A549 (cell line): ENCODE measurements at regions of chr11 and their contacts with region 1.

Region 1: DNA sequence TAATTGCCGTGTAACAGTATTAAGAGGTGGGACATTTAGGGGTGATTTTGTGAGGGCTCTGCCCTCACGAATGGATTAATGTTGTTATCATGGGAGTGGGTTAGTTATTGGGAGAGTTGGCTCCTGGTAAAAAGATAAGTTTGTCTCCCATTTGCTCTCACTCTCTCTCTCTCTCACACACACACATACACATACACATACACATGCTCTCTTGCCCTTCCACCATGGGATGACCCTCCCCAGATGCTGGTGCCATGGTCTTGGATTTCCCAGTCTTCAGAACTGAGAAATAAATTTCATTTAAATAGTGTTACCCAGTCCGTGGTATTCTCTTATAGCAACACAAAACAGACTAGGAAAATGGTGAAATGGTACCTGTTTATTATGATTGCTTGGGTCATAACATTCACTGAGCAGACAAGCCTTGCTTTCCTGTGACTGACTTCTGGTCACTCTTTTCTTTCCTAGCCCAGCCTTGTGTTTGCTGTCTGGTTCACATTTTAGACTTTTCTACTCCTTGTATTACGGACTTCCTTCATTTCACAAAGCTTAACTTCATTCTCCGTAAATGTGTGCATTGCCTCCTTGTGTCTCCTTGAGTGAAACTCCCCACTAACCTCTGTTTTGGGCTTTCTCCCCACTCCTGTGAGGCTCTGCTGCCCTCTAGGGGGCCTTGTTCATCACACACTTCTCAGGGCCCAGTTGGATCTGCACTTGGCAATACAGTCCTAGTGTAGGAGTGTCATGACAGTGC is 206.5 kb upstream of the CTSC start:
- DNase-seq: peak; percentile 48 to 82
- ATAC-seq: peak; percentile 100
- H3K4me3 ChIP-seq: no peak overlapping the region
- H3K27ac ChIP-seq: peak overlapping the region; percentile 11 to 59; a peak in 5 of 6 replicates
- H3K4me1 ChIP-seq: peaks cover 6% of the 10 kb centered on the region; the same call in 1 of the 3 replicates
- CTCF ChIP-seq: peak; percentile 99
- EP300 ChIP-seq: no peak
- POLR2A ChIP-seq: no peak
- RAD21 ChIP-seq: peak; percentile 99 to 100

Region 2: DNA sequence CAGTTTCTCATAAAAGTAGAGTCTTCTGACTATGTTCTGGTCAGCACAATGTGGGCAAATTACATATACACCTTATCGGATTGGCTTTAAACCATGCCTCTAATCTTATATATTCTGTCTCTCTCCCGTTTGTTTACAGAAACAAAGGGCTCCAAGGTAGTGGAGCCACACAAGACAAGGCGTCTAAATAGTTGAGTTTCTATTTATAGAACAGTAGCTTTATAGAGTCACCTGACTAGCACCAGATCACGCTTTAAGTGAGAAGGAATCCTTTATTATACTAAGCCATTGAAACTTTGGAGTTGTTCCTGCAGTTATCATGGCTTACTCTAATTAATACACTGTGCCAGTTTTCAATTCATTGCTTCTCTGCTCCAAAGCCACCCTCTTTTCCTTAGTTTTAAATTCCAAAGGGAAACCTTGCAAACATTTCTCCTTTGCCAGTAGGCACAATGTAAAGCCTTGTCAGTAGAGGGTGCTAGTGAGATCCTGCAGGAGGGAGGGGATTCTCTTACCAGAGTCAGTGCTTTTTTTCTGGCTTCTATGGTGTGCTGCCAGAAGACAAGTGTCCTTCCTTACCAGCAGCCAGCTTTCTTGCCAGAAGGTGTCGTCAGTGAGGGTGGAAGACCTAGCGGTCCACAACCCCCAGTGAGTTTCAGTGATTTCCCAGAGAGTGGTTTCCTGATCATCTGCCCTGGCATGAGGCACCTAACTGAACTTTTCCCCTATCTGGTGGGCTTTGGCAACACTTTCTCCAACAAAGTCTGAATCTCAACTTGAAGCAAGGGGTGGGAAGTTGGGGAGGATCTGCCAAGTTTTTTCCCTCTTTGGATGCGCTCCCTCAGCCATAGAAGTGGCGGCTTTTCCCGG is 440.5 kb before region 1 on chr11:
- CTCF ChIA-PET with region 1: interaction called, 31 read pairs
- POLR2A ChIA-PET with region 1: no interaction called
- DNase-seq: peak; percentile 58 to 95
- ATAC-seq: peak; percentile 96 to 99
- H3K4me3 ChIP-seq: peak overlapping the region; percentile 21
- H3K27ac ChIP-seq: peak overlapping the region; percentile 79 to 87
- H3K4me1 ChIP-seq: peaks cover 41% of the 10 kb centered on the region
- CTCF ChIP-seq: peak; percentile 89
- EP300 ChIP-seq: no peak
- POLR2A ChIP-seq: no peak
- RAD21 ChIP-seq: peak; percentile 70 to 77

Region 3: DNA sequence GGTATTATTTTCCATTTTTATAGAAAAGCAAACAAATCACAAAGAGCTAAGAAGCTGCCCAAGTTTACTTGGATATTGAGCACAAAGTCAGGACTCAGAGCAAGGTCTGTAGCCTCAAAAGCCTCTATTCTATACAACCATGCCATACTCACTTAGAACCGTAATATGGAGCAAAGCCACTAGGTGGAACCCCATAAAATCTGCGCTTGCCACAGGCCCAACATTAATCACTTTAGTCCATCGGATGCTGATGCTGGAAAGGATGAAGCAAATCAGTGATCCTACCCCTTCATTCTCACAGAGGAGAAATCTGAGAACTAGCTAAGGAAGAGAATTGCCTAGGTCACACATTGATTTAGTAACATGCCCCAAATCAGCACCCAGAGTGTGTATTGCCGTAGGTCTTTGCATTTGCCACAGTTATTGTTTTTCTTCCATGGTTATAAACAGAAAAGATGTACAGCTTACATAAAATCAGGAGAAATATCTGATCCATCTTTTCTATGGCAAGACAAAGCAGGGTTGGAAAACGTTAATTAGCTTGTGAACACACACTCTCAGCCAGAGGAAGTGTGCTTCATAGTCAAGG is 312.1 kb before region 1 on chr11:
- CTCF ChIA-PET with region 1: interaction called, 11 read pairs
- POLR2A ChIA-PET with region 1: no interaction called
- DNase-seq: peak; percentile 7 to 11
- ATAC-seq: peak; percentile 77 to 90; a peak in 4 of 6 replicates
- H3K4me3 ChIP-seq: no peak overlapping the region
- H3K27ac ChIP-seq: no peak overlapping the region
- H3K4me1 ChIP-seq: no peaks in the 10 kb centered on the region
- CTCF ChIP-seq: peak; percentile 35
- EP300 ChIP-seq: no peak
- POLR2A ChIP-seq: no peak
- RAD21 ChIP-seq: peak; percentile 36 to 39; a peak in 4 of 5 replicates

Region 4: DNA sequence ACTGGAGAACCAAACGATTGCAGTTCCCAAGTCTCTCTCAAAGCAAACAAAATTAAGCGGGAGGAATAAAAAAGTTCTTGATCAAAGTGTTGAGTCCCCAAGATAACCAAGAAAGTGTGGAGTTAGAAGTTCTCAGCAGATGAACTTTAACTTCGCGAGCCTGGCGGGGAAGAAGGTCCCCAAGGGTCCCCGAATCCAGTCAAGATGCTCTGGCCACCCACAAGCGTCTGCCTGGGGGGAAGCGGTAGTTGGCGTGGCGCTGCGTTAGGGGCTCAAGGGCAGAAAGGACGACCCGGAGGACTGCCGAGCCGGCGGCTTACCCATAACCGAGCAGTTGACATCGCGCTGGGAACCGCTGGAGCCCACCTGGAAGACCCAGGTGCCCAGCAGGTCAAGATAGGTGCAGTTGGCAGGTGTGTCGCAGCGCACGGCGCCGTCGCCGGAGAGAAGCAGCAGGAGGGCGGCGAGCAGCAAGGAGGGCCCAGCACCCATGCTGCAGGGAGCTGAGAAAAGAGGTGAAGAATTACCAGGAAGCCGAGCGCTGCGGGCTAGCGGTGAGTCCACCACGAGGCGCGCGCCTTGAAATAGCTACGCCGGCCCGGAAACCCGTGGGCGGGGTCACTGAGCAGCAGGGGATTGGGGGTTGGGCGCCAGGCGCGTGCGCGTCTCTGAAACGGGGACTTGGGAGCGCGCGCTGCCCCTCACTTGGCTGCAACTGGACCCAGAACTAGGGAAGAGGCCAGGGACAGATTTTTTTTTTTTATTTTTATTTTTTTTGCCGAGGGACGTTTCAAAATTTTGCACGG is 206.7 kb before region 1 on chr11 and contains the start of gene CTSC:
- CTCF ChIA-PET with region 1: interaction called, 14 read pairs
- POLR2A ChIA-PET with region 1: interaction called, 3 read pairs
- DNase-seq: peak; percentile 77 to 87
- ATAC-seq: peak; percentile 97 to 98
- H3K4me3 ChIP-seq: peak within 1 kb of the TSS; percentile 71
- H3K27ac ChIP-seq: peak within 1 kb of the TSS; percentile 89 to 94
- H3K4me1 ChIP-seq: peaks cover 11% of the 10 kb centered on the region; the same call in 2 of the 3 replicates
- CTCF ChIP-seq: no peak
- EP300 ChIP-seq: no peak
- POLR2A ChIP-seq: peak; percentile 73
- RAD21 ChIP-seq: peak; percentile 4 to 27; a peak in 1 of 5 replicates
- polyA plus RNA-seq, gene CTSC: 118 and 123 TPM in 2 replicates

Region 5: DNA sequence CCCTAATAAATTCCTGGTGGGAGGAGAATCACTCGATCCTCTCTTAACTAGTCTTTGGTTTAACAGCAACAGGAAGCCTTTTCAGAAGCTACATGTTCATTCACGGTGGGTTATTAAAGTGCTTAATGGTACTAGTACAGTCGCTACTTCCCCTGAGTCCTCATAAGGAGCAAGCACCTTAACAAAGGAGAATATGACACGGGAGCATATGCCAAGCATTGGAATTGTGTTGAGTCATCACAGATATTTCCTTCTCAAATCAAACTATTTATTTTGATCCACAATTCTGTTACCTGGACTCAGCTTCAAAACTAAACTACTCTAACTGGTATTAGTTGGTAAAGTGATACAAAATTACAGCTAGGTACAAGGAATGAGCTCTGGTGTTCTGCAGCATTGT is 29.1 kb before region 1 on chr11:
- CTCF ChIA-PET with region 1: interaction called, 11 read pairs
- POLR2A ChIA-PET with region 1: no interaction called
- DNase-seq: no peak
- ATAC-seq: no peak
- H3K4me3 ChIP-seq: no peak overlapping the region
- H3K27ac ChIP-seq: no peak overlapping the region
- H3K4me1 ChIP-seq: no peaks in the 10 kb centered on the region
- CTCF ChIP-seq: no peak
- EP300 ChIP-seq: no peak
- POLR2A ChIP-seq: no peak
- RAD21 ChIP-seq: no peak

Region 6: DNA sequence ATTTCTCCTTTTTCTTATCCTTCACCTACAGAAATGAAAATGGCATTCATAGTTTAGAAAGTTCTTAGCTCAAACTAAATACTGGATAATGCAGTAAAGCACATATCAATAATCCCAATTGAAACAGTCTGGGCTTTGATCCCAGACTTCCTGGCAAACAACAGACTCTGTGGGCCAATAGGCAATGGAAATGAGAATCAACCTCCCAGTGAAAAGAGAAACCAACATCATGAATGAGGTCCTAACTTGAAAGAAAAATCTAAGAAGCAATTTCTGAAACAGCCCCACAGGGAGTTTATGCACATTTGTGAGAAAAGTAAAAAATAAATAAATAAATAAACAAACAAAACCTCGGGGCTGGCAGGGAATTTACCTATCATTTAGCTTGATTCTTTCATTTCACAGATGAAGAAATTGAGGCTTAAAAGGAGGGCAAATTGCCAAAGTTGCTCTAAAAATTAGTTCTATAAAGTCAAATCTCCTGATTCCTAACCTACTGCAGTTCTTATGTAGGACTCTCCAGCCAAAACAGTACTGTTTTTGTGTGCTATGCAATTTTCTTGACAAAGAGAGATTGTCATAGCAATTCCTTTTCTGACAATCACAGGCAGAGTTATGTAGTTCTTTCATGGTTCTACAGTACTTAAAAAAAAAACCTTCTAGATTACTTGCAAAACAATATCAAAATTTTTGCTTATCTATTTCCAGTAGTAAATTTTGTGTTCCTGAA is 255.9 kb after region 1 on chr11:
- CTCF ChIA-PET with region 1: no interaction called
- POLR2A ChIA-PET with region 1: no interaction called
- DNase-seq: no peak
- ATAC-seq: no peak
- H3K4me3 ChIP-seq: no peak overlapping the region
- H3K27ac ChIP-seq: no peak overlapping the region
- H3K4me1 ChIP-seq: no peaks in the 10 kb centered on the region
- CTCF ChIP-seq: no peak
- EP300 ChIP-seq: no peak
- POLR2A ChIP-seq: no peak
- RAD21 ChIP-seq: no peak